GM13977 (cell line): ENCODE measurements at regions of chr1 and their contacts with region 1.

Region 1: GRCh38 chr1:151739590-151740375 is 18.5 kb downstream of the RIIAD1 start:
- DNase-seq: no peak
- CTCF ChIP-seq: no peak

Region 2: DNA sequence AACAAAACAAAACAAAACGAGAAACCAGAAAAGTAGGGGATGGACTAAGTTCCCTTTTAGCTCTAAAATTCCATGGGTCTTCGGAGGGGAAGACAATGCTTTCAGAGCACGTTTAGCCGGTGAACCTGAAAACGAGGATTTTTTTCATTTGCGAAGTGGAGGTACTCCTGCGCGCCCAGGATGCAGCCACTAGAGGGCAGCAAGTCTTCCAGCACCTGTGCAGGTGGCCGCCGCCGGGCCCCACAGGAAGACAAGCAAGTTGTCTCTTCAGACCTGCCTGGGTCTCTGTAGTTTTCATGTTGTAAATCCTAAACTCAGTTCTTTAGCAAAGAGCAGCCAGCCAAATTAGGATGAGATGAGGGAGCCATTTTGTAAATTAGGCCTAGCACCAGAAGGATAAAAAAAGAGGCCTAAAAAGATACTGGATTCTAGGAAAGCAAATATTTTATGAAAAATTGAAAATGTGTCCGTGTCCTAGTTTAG is 145.6 kb before region 1 on chr1:
- in situ Hi-C with region 1: loop called (anchors 10 kb)
- DNase-seq: peak; percentile 88
- CTCF ChIP-seq: peak; percentile 97

Region 3: DNA sequence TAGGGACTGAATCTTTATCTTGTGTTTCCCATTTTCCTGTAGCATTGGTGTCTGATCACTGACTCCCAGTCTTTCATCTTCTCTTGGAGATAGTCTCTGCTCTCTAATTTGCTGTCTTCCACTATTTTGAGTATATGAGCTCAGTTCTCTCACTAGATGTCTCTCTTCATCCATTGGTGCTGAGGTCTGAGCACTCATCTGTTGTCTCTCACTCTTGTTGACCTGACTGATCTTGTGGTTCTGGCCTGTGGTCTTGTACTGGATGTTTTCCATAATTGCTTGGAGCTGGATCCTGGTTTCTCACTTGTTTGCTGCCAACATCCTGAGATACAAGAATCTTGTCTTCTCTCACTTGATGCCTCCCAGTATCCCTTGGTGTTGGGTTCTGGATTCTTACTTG is 322.2 kb after region 1 on chr1:
- in situ Hi-C with region 1: no loop called
- DNase-seq: no peak
- CTCF ChIP-seq: no peak